ENCODE measurements at regions of chr3 and their contacts with region 1.

Region 1: GRCh38 chr3:142993958-142994442 is 7.4 kb upstream of the U2SURP start:
- DNase-seq: peak; percentile 77
- H3K4me3 Mint-ChIP-seq: no peak overlapping the region
- H3K27ac Mint-ChIP-seq: no peak overlapping the region
- H3K4me1 Mint-ChIP-seq: no peaks in the 10 kb centered on the region
- H3K27me3 Mint-ChIP-seq: peaks cover 4% of the 10 kb centered on the region

Region 2: DNA sequence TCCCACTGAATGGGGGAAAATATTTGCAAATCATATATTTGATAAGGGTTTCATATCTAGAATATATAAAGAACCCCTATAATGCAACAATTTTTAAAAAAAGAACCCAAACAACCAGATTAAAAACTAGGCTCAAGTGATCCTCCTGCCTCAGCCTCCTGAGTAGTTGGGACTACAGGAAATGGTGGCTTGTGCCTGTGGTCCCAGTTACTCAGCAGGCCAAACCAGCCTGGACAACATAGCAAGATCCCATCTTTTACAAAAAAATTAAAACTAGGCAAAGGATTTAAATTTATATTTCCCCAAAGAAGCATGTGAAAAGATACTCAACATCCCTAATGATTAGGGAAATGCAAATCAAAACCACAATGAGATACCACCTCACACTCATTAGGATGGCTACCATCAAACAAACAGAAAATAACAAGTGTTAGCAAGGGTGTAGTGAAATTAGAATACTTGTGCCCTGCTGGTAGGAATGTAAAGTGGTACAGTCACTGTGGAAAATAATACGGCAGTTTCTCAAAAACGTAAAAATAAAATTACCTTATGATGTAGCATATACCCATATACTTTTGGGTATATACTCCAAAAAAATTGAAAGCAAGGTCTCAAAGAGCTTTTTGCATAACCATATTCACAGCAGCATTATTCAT is 864.4 kb before region 1 on chr3:
- CTCF ChIA-PET with region 1: no interaction called
- intact Hi-C with region 1: loop called (anchors 1 kb)
- DNase-seq: no peak
- H3K4me3 Mint-ChIP-seq: no peak overlapping the region
- H3K27ac Mint-ChIP-seq: no peak overlapping the region
- H3K4me1 Mint-ChIP-seq: peaks cover 2% of the 10 kb centered on the region
- H3K27me3 Mint-ChIP-seq: no peaks in the 10 kb centered on the region

Region 3: DNA sequence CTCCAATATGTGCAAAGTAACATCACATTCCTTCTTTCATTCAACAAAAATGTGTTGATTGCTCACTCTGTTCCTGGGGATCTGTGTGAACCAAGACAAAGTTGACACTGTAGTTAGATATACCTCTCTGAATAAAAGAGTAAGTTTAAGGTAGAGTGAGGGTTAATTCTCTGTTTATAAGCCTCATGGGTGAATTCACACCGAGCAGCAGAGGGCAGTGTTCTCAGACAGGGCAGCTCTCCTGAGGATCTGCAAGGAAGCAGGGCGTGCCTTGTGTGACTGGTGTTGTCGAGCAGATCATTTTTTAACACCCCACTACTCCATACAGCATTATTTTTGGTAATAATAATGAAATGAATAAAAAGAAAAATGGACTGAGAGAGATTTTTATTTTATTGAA is 64.9 kb before region 1 on chr3:
- CTCF ChIA-PET with region 1: no interaction called
- intact Hi-C with region 1: loop called (anchors 2 kb)
- DNase-seq: peak; percentile 65
- H3K4me3 Mint-ChIP-seq: no peak overlapping the region
- H3K27ac Mint-ChIP-seq: no peak overlapping the region
- H3K4me1 Mint-ChIP-seq: no peaks in the 10 kb centered on the region
- H3K27me3 Mint-ChIP-seq: peaks cover 13% of the 10 kb centered on the region

Region 4: DNA sequence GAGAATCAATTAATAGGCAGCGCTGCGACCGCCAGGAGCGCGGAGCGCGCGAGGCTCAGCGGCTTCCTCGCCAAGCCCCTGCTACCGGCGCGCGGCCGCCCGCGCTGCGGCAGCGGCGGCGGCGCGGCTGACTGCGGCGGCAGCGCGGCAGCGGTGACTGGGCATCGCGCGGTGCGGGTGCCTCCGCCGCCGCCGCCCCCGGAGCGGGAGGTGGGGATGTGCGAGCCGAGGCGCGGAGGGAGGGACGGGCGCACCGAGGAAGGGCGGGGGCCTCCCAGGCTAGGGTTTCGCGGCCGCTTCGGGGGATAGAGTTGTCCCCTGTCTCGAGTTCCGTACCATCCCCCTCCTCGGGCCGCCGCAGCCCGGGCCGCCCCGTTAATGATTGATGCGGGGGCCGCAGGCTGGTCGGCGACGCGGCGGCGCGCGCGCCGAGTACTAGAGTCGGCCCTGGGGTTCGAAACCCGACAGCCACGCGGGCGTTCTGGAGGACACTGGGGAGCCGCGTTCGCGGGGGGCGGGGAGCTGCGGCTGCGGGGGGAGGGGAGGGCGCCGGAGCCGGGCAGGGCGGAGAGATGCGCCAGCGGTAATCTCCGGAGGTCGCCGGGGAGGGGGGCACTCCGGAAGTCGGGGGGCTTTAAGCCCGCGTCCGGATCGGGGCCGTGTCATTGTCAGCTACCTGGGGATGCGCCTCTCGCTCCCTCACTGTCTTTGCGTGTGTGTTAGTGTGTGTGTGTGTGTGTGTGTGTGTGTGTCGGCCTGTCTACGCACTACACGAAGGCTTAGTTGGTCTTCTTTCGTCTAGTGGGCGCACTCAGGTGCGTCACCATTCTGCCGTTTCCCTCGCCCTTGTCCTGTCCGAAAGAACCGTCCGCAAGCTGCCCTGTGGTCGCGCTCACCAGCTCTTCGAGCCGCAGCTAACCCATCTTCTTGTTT is 30.2 kb before region 1 on chr3 and contains the start of gene PAQR9:
- CTCF ChIA-PET with region 1: no interaction called
- intact Hi-C with region 1: no loop called
- DNase-seq: peak; percentile 21
- H3K4me3 Mint-ChIP-seq: peak within 1 kb of the TSS; percentile 71
- H3K27ac Mint-ChIP-seq: no peak within 1 kb of the TSS
- H3K4me1 Mint-ChIP-seq: peaks cover 6% of the 10 kb centered on the region
- H3K27me3 Mint-ChIP-seq: peaks cover 44% of the 10 kb centered on the region
- total RNA-seq, gene PAQR9: not detected

Region 5: DNA sequence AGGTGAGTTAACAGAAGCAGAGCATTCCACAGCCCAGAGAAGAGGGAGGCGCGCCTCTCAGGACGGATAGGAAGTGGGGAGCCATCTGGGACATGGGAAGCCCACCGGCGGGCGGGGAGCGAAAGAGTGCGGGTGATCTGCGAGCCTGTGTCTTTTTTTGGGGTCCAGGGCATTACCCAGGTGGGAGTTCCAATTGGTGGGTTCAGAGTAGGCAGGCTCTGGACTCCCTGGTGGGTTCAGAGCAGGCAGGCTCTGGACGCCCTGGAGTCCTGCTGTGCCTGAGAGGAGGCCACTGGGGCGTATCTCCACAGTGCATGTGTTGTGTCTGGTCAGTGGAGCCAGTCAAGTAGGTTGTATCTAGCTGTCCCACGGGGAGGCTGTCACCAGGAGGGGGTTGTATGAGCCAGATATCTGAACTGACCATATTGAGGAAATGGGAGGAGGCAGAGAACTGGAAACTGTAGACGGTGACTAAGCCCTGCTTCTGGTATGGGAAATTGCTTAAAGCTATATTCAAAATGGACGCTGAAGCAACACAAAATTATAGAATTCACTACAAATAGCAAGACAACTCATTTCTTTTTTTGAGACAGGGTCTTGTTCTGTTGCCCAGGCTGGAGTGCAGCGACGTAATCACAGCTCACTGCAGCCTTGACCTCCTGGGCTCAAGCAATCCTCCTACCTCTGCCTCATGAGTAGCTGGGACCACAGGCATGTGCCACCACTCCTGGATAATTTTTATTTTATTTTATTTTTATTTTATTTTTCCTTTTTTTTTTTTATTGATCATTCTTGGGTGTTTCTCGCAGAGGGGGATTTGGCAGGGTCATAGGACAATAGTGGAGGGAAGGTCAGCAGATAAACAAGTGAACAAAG is 91.1 kb after region 1 on chr3:
- CTCF ChIA-PET with region 1: no interaction called
- intact Hi-C with region 1: no loop called
- DNase-seq: peak; percentile 27
- H3K4me3 Mint-ChIP-seq: peak overlapping the region; percentile 9
- H3K27ac Mint-ChIP-seq: peak overlapping the region; percentile 8
- H3K4me1 Mint-ChIP-seq: peaks cover 21% of the 10 kb centered on the region
- H3K27me3 Mint-ChIP-seq: no peaks in the 10 kb centered on the region

Measured in activated naive CD4-positive, alpha-beta T cell treated with anti-CD3 and anti-CD28 coated beads for 36 hours (primary cell).